ENCODE measurements at regions of chr11 and their contacts with region 1.

Region 1: GRCh38 chr11:126989942-126990715 is 10.4 kb downstream of the KIRREL3 start:
- DNase-seq: peak; percentile 48 to 90
- H3K4me3 ChIP-seq: no peak overlapping the region
- CTCF ChIP-seq: no peak
- POLR2A ChIP-seq: no peak

Region 2: DNA sequence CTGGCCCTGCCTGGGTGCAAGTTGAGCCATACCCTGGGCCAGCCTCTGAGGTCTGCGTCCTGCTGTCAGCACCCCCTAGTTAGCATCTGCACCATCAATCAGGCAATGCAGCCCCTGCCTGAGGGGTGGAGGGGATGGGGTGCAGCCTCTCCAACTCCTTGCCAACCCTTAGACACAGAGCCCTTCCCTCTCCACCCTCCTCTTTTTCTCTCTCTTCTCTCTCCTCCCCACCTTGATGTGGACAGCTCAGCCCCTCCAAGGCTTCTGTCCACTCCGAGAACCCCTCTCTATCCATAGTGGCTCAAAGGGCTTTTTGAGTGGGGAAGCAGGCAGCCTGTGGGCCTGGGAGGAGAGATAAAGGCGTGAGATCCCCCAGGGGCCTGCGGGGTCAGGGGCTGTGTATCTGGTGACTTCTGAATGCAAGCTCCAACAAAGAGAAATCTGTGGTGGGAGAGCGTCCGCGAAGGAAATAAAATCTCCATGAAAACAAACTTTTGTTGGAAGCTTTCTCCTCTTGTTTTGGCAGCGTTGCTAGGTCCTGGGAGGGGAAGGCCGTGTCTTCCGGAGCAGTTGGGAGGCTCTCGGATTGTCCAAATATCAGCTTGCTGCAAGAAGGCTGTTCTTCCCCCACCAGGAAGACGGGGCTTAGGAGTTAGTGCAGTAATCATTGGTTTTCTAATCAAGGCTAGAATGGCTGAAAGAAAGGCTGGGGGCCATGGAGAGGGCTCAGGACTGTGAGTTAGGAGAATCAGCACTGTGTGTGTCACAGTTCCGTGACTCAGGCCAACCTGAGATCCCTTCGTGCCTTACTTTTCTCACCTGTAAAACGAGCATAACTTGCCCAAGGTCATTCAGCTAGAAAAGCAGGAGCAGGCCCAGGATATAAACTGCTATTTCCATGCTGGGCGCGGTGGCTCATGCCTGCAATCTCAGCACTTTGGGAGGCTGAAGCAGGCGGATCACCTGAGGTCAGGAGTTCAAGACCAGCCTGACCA is 1775.3 kb before region 1 on chr11:
- intact Hi-C with region 1: no loop called
- DNase-seq: no peak
- H3K4me3 ChIP-seq: no peak overlapping the region
- CTCF ChIP-seq: no peak
- POLR2A ChIP-seq: no peak

Region 3: GRCh38 chr11:126624506-126624905 is 365.6 kb before region 1 on chr11:
- intact Hi-C with region 1: no loop called
- DNase-seq: no peak
- H3K4me3 ChIP-seq: no peak overlapping the region
- CTCF ChIP-seq: no peak
- POLR2A ChIP-seq: no peak

Region 4: GRCh38 chr11:126716456-126717083 is 273.6 kb before region 1 on chr11:
- intact Hi-C with region 1: loop called (anchors 10 kb)
- DNase-seq: peak in 1 of 2 donors; percentile 25
- H3K4me3 ChIP-seq: no peak overlapping the region
- CTCF ChIP-seq: no peak
- POLR2A ChIP-seq: no peak

Measured in lower leg skin (tissue), 4 donors.